ENCODE measurements at regions of chr18 and their contacts with region 1.

Region 1: DNA sequence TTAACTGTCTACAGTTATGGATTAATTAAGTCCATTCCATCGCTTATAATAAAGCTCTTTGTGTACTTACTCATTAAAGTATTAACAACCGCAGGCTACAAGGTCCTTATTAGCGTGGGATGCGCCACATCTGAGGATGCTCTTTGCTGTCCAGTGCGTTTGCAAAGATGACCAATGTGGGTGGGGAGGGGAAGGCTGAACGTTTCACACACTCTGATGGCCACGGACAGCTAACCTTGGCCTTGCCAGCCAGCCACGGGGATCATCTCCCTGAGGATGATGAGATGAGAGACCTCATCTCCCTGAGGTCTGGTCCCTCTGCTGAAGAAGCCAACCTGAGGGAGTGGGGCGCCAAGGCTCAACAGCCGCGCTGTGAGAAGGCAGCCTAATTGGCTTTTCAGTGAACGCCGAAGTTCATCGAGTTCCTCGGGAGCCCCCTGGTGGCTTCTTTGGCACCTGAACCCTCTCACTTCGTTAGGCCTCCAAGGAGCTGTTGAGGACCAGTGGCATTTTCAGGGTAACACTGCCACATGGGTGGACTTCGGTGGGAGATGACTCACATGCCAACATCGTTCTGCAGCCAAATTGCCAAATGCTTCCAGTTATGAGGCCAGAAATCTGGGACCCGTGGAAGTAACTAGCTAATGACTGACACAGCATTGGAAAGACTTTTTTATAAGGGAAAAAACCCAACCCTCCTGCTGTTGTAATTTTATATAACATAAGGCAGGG is 69.3 kb upstream of the SEC11C start:
- DNase-seq: peak; percentile 89
- ATAC-seq: peak; percentile 96
- H3K4me3 Mint-ChIP-seq: no peak overlapping the region
- H3K27ac Mint-ChIP-seq: no peak overlapping the region
- H3K4me1 Mint-ChIP-seq: no peaks in the 10 kb centered on the region
- H3K27me3 Mint-ChIP-seq: peaks cover 2% of the 10 kb centered on the region
- CTCF ChIP-seq: peak; percentile 81

Region 2: GRCh38 chr18:58761970-58762780 is 308.2 kb before region 1 on chr18:
- CTCF ChIA-PET with region 1: interaction called, 76 read pairs
- POLR2A ChIA-PET with region 1: no interaction called
- intact Hi-C with region 1: no loop called
- DNase-seq: no peak
- ATAC-seq: no peak
- H3K4me3 Mint-ChIP-seq: no peak overlapping the region
- H3K27ac Mint-ChIP-seq: no peak overlapping the region
- H3K4me1 Mint-ChIP-seq: peaks cover 21% of the 10 kb centered on the region
- H3K27me3 Mint-ChIP-seq: peaks cover 26% of the 10 kb centered on the region
- CTCF ChIP-seq: no peak

Region 3: GRCh38 chr18:58781627-58782194 is 288.6 kb before region 1 on chr18:
- CTCF ChIA-PET with region 1: interaction called, 47 read pairs
- POLR2A ChIA-PET with region 1: no interaction called
- intact Hi-C with region 1: loop called (anchors 5 kb)
- DNase-seq: peak; percentile 81
- ATAC-seq: peak; percentile 90
- H3K4me3 Mint-ChIP-seq: no peak overlapping the region
- H3K27ac Mint-ChIP-seq: no peak overlapping the region
- H3K4me1 Mint-ChIP-seq: no peaks in the 10 kb centered on the region
- H3K27me3 Mint-ChIP-seq: peaks cover 11% of the 10 kb centered on the region
- CTCF ChIP-seq: peak; percentile 82

Region 4: GRCh38 chr18:59041819-59042815 is 28.2 kb before region 1 on chr18:
- CTCF ChIA-PET with region 1: interaction called, 12 read pairs
- POLR2A ChIA-PET with region 1: no interaction called
- intact Hi-C with region 1: no loop called
- DNase-seq: no peak
- ATAC-seq: no peak
- H3K4me3 Mint-ChIP-seq: no peak overlapping the region
- H3K27ac Mint-ChIP-seq: no peak overlapping the region
- H3K4me1 Mint-ChIP-seq: peaks cover 15% of the 10 kb centered on the region
- H3K27me3 Mint-ChIP-seq: peaks cover 4% of the 10 kb centered on the region
- CTCF ChIP-seq: no peak

Region 5: GRCh38 chr18:59056706-59057492 is 13.4 kb before region 1 on chr18:
- CTCF ChIA-PET with region 1: interaction called, 13 read pairs
- POLR2A ChIA-PET with region 1: no interaction called
- intact Hi-C with region 1: no loop called
- DNase-seq: peak; percentile 76
- ATAC-seq: peak; percentile 67
- H3K4me3 Mint-ChIP-seq: no peak overlapping the region
- H3K27ac Mint-ChIP-seq: no peak overlapping the region
- H3K4me1 Mint-ChIP-seq: no peaks in the 10 kb centered on the region
- H3K27me3 Mint-ChIP-seq: peaks cover 13% of the 10 kb centered on the region
- CTCF ChIP-seq: peak; percentile 83

Region 6: DNA sequence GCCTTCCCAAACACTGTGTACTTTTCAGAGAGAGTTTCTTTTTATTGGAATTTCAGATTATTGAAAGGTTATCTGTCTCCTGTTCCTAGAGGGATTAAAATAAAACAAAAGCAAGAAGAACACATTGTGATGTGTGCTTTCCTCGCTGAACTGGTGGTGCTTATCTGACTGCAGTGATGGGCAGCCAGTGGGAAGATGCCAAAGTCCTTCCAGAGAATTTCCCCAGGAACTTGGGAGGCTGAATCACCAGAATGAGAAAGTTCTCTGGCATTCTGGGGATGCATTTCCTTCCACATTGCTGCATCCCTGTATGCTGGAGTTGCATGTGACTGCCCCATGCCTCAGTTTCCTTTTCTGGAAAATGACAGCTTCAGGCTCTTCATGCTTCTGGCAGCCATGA is 15.4 kb after region 1 on chr18:
- CTCF ChIA-PET with region 1: interaction called, 55 read pairs
- POLR2A ChIA-PET with region 1: no interaction called
- intact Hi-C with region 1: no loop called
- DNase-seq: no peak
- ATAC-seq: no peak
- H3K4me3 Mint-ChIP-seq: no peak overlapping the region
- H3K27ac Mint-ChIP-seq: no peak overlapping the region
- H3K4me1 Mint-ChIP-seq: peaks cover 7% of the 10 kb centered on the region
- H3K27me3 Mint-ChIP-seq: peaks cover 16% of the 10 kb centered on the region
- CTCF ChIP-seq: no peak